GM13976 (cell line): ENCODE measurements at regions of chr6 and their contacts with region 1.

Region 1: DNA sequence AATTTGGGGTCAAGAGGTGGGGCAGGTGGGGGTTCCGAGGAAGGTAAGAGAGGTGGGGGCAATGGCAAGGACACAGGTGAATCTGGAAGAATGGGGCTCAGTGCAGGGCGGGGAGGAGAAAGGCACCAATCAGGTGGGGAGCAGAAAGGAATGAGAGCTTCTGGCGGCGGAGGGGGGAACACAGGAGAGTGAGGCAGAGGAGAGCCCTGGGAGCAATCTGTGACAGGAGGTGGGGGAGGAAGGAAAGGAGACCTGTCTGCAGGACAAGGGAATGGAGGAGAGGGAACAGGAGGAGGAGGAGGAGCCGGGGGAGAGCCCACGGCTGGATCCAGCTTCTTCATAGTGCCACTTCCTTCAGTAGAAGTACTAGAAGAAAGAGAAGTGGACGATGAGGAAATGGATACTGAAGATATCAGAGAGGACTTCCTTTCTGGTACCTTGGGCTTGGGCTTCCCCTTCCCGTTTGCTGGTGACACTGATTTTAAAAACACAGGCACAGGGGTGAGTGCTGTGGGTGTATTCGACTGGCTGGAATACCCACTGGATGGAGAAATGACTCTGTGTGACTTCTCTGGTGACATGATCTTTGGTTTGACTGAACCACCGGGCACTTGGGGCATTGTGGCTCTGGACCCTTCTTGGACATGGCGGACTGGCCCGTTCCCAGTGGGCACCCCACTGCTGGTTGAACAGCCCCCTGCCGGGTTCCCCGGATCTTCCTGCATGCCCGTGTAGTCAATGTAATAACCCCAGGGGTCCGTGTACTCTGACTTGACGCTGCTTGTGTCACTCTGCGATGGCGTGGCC is 27.4 kb downstream of the HEBP2 start:
- DNase-seq: no peak
- CTCF ChIP-seq: no peak

Region 2: DNA sequence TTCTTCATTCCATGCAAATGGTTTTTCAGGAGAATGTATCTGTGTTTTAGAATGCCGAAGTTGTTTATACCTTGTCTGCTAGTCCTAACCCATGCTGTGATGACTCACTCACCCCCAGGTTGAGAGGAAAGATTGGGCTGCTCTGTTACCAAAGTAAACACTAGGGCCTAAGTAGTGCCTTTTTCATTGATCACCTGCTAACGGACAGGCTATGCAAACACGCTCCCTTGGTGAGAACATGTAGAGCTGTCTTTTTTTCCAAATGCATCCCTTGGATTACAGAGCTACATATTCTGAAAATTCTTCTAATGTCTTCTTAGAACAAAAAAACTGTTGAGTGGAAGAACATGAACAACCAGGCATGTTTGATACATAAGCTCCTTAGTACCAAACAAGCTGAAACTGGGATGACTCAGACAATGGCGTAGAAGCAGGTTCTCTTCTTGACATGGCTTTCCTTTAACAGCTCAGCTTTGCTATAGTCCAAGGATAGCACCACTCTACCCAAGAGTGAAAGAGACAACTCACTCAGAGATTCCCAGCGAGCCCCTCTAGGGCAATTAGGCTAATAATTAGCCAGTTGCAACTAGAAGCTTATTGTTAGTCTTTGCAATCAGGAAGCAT is 344.8 kb before region 1 on chr6:
- in situ Hi-C with region 1: no loop called
- DNase-seq: no peak
- CTCF ChIP-seq: no peak

Region 3: GRCh38 chr6:138509371-138509770 is 77.9 kb after region 1 on chr6:
- in situ Hi-C with region 1: loop called (anchors 5 kb)
- DNase-seq: peak; percentile 32
- CTCF ChIP-seq: peak; percentile 2